ENCODE measurements at regions of chr18 and their contacts with region 1.

Region 1: GRCh38 chr18:10946058-10946457 is 203.3 kb downstream of the PIEZO2 start:
- DNase-seq: no peak
- ATAC-seq: no peak
- H3K4me3 ChIP-seq: no peak overlapping the region
- H3K27ac ChIP-seq: no peak overlapping the region
- H3K4me1 ChIP-seq: no peaks in the 10 kb centered on the region
- H3K27me3 ChIP-seq: no peaks in the 10 kb centered on the region
- CTCF ChIP-seq: no peak

Region 2: GRCh38 chr18:10442551-10442971 is 503.5 kb before region 1 on chr18:
- CTCF ChIA-PET with region 1: interaction called, 11 read pairs
- POLR2A ChIA-PET with region 1: no interaction called
- in situ Hi-C with region 1: no loop called
- intact Hi-C with region 1: no loop called
- DNase-seq: no peak
- ATAC-seq: no peak
- H3K4me3 ChIP-seq: no peak overlapping the region
- H3K27ac ChIP-seq: no peak overlapping the region
- H3K4me1 ChIP-seq: no peaks in the 10 kb centered on the region
- H3K27me3 ChIP-seq: peaks cover 15% of the 10 kb centered on the region; the same call in 1 of the 2 replicates
- CTCF ChIP-seq: no peak

Measured in Panc1 (cell line).